GM10248 (cell line): ENCODE measurements at regions of chr15 and their contacts with region 1.

Region 1: GRCh38 chr15:69493406-69493805 is 40.8 kb downstream of the RPLP1 start:
- DNase-seq: no peak
- CTCF ChIP-seq: no peak

Region 2: GRCh38 chr15:69452692-69453521 is 40.5 kb before region 1 on chr15 and contains the start of gene RPLP1:
- CTCF ChIA-PET with region 1: no interaction called
- POLR2A ChIA-PET with region 1: no interaction called
- DNase-seq: peak; percentile 95
- CTCF ChIP-seq: no peak

Region 3: GRCh38 chr15:69475769-69476358 is 17.5 kb before region 1 on chr15:
- CTCF ChIA-PET with region 1: interaction called, 12 read pairs
- POLR2A ChIA-PET with region 1: no interaction called
- DNase-seq: peak; percentile 70
- CTCF ChIP-seq: peak; percentile 95

Region 4: DNA sequence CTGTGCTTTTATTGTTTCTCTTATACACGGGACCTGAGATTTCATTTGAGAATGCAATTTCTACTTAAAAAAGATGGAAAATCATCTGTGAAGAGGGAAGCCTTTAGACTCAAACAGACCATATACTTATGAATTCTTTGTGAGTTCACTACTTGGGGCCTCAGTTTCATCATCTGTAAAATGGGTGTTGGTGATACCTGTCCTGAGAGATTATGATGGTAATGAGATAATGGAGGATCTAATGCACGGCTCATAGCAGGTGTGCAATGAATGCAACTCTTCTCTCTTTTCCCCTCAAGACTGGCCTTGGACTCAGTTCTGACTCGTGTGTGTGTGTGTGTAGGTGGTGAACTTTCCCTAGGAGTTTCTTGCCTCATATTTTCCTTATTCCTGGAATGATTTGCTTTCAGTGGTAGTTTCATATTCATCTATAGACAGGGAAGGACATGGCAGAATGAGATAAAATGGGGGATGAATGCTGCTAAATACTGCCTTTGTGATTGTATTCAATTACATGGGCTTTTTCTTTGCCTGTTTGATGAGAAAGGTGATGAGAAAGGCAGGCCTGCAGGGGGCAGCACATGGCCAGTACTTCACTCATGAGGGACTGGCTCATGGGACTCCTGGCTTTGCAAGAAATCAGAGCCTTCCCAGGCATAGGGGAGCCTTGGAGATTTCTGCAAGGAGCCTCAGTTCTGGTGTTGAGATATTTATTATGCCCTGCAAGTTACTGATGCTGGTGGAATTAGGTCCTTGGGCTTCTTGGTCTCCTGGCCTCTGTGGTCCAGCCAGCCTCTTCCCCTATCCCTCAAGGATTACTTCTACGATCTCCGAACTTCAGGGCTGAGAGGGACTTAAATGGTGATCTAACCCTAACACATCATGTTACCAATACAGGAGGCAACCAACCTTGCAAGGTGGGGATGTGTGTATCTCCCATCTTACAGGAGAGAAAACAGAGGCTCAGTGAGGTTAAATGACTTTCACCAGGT is 29.9 kb after region 1 on chr15:
- CTCF ChIA-PET with region 1: no interaction called
- POLR2A ChIA-PET with region 1: no interaction called
- DNase-seq: peak; percentile 72
- CTCF ChIP-seq: peak; percentile 57